ENCODE measurements at regions of chr7 and their contacts with region 1.

Region 1: DNA sequence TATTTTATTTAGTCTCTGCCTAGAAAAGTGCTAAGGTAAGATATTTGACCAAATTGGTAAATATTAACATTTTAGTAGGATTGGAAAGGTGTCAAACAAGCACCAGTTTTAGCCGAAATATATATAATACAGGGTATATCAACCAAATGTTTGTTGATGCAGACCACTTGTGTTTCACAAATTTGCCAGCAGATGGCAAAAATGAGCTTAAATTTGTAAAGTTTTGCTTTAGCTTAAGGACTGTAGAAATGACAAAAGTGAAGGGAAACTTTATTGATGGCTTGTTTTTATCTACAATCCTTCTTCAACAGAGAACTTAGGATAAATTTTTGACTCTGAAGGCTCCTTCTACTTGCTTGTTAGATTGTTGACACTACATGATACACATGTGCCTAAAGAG is 4.8 kb upstream of the POLR1F start:
- DNase-seq: peak; percentile 66
- H3K4me3 Mint-ChIP-seq: no peak overlapping the region
- H3K27ac Mint-ChIP-seq: no peak overlapping the region
- H3K4me1 Mint-ChIP-seq: peaks cover 31% of the 10 kb centered on the region
- H3K27me3 Mint-ChIP-seq: no peaks in the 10 kb centered on the region
- CTCF ChIP-seq: peak; percentile 53

Region 2: GRCh38 chr7:19397911-19398310 is 315.8 kb before region 1 on chr7:
- CTCF ChIA-PET with region 1: no interaction called
- intact Hi-C with region 1: no loop called
- DNase-seq: no peak
- H3K4me3 Mint-ChIP-seq: no peak overlapping the region
- H3K27ac Mint-ChIP-seq: no peak overlapping the region
- H3K4me1 Mint-ChIP-seq: peaks cover 11% of the 10 kb centered on the region
- H3K27me3 Mint-ChIP-seq: peaks cover 13% of the 10 kb centered on the region
- CTCF ChIP-seq: no peak

Region 3: GRCh38 chr7:19619122-19619521 is 94.6 kb before region 1 on chr7:
- CTCF ChIA-PET with region 1: no interaction called
- intact Hi-C with region 1: no loop called
- DNase-seq: no peak
- H3K4me3 Mint-ChIP-seq: no peak overlapping the region
- H3K27ac Mint-ChIP-seq: no peak overlapping the region
- H3K4me1 Mint-ChIP-seq: no peaks in the 10 kb centered on the region
- H3K27me3 Mint-ChIP-seq: peaks cover 56% of the 10 kb centered on the region
- CTCF ChIP-seq: no peak

Region 4: DNA sequence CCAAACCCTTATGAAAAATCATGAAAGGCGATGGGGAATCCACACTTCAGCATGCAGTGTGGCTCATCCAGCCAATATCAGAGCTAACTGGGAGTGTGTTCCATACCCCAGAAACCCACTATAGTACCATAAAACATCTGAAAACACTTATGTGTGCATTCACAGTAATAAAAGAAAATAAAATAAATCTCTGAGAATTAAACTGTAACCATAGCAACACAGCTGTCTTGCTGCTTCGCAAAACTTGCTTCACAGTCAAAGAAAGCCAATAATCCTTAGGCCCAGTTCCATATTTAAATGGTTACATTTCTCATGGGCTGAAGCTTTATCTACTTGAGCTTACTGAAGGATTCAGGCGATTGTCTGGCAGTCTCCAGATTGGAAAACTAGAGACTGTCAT is 15.0 kb after region 1 on chr7:
- CTCF ChIA-PET with region 1: interaction called, 10 read pairs
- intact Hi-C with region 1: no loop called
- DNase-seq: no peak
- H3K4me3 Mint-ChIP-seq: no peak overlapping the region
- H3K27ac Mint-ChIP-seq: no peak overlapping the region
- H3K4me1 Mint-ChIP-seq: no peaks in the 10 kb centered on the region
- H3K27me3 Mint-ChIP-seq: no peaks in the 10 kb centered on the region
- CTCF ChIP-seq: no peak

Region 5: GRCh38 chr7:19811386-19811785 is 97.7 kb after region 1 on chr7:
- CTCF ChIA-PET with region 1: no interaction called
- intact Hi-C with region 1: no loop called
- DNase-seq: no peak
- H3K4me3 Mint-ChIP-seq: no peak overlapping the region
- H3K27ac Mint-ChIP-seq: no peak overlapping the region
- H3K4me1 Mint-ChIP-seq: no peaks in the 10 kb centered on the region
- H3K27me3 Mint-ChIP-seq: no peaks in the 10 kb centered on the region
- CTCF ChIP-seq: no peak

Region 6: GRCh38 chr7:20158684-20159083 is 445.0 kb after region 1 on chr7:
- CTCF ChIA-PET with region 1: interaction called, 12 read pairs
- intact Hi-C with region 1: no loop called
- DNase-seq: peak; percentile 20
- H3K4me3 Mint-ChIP-seq: no peak overlapping the region
- H3K27ac Mint-ChIP-seq: peak overlapping the region; percentile 48
- H3K4me1 Mint-ChIP-seq: peaks cover 24% of the 10 kb centered on the region
- H3K27me3 Mint-ChIP-seq: no peaks in the 10 kb centered on the region
- CTCF ChIP-seq: no peak

Region 7: DNA sequence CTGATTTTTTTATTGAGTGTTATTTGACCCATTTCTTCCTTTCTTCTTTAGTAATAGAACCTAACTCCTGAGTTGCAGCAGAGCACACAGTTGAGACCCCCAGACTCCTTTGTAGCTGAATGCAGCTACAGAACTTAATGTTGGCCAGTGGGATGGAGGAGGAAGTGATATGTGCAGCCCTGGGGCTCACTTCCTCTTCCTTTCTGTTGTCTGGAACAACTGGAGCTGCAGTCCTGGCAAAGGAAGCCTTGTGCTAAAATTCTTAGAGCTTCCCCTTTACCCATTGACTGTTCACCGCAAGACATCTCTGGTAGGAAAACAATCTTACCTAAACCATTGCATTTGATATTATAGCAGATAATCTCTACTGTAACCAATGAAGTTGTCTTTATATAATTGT is 703.6 kb after region 1 on chr7:
- CTCF ChIA-PET with region 1: no interaction called
- intact Hi-C with region 1: no loop called
- DNase-seq: no peak
- H3K4me3 Mint-ChIP-seq: no peak overlapping the region
- H3K27ac Mint-ChIP-seq: no peak overlapping the region
- H3K4me1 Mint-ChIP-seq: peaks cover 17% of the 10 kb centered on the region
- H3K27me3 Mint-ChIP-seq: no peaks in the 10 kb centered on the region
- CTCF ChIP-seq: no peak

Region 8: GRCh38 chr7:20514364-20514763 is 800.7 kb after region 1 on chr7:
- CTCF ChIA-PET with region 1: no interaction called
- intact Hi-C with region 1: loop called (anchors 10 kb)
- DNase-seq: peak; percentile 77
- H3K4me3 Mint-ChIP-seq: no peak overlapping the region
- H3K27ac Mint-ChIP-seq: peak overlapping the region; percentile 70
- H3K4me1 Mint-ChIP-seq: peaks cover 17% of the 10 kb centered on the region
- H3K27me3 Mint-ChIP-seq: no peaks in the 10 kb centered on the region
- CTCF ChIP-seq: no peak